CD4-positive, alpha-beta memory T cell (primary cell): ENCODE measurements at regions of chr5 and their contacts with region 1.

Region 1: GRCh38 chr5:57137401-57137800 is 36.5 kb upstream of the GPBP1 start:
- DNase-seq: no peak
- H3K4me3 ChIP-seq: no peak overlapping the region
- H3K4me3 Mint-ChIP-seq: no peak overlapping the region
- H3K27ac ChIP-seq: no peak overlapping the region
- H3K27ac Mint-ChIP-seq: no peak overlapping the region
- H3K4me1 ChIP-seq: no peaks in the 10 kb centered on the region
- H3K4me1 Mint-ChIP-seq: peaks cover 0 to 2% (median under 1%) of the 10 kb centered on the region in 4 donors
- H3K27me3 ChIP-seq: no peaks in the 10 kb centered on the region
- H3K27me3 Mint-ChIP-seq: peaks cover 3 to 5% of the 10 kb centered on the region in 2 donors

Region 2: DNA sequence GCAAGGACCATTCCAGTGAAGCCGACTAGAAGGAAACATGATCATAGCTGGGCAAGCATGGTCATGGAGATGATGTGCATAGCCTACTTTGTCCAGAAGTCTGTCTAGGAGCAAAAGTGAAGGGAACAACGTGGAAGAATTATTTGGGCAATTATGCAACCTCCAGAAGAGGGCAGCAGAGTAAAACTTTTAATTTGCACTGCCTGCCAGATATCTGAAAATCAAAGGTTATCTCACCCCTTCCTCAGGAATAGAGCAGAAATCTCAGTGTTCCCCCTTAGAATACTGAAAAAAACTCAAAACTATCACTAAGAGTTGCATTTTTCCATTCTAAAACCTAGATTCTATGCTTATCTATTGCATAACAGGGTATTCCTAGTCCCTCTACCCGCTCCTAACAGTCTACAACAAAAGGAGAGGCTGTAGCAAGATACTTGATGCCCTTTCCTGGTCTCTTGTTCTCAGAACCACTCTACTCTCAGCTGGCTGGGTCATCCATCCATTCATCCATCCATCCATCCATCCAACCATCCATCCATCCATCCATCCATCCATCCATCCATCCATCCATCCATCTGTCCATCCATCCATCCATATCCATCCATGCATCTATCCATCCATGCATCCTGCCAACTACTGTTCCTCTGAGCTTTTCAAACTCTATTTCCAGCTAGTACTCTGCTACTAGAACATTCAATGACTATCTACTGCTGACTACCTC is 236.4 kb before region 1 on chr5:
- CTCF ChIA-PET with region 1: interaction called, 143 read pairs
- POLR2A ChIA-PET with region 1: interaction called, 6 read pairs
- intact Hi-C with region 1: loop called (anchors 1 kb)
- DNase-seq: peak in 4 of 5 donors; percentile 43 to 64 (median 54)
- H3K4me3 ChIP-seq: no peak overlapping the region
- H3K4me3 Mint-ChIP-seq: no peak overlapping the region
- H3K27ac ChIP-seq: no peak overlapping the region
- H3K27ac Mint-ChIP-seq: no peak overlapping the region
- H3K4me1 ChIP-seq: no peaks in the 10 kb centered on the region
- H3K4me1 Mint-ChIP-seq: peaks cover 2 to 6% (median 4%) of the 10 kb centered on the region in 4 donors
- H3K27me3 ChIP-seq: no peaks in the 10 kb centered on the region
- H3K27me3 Mint-ChIP-seq: no peaks in the 10 kb centered on the region

Region 3: DNA sequence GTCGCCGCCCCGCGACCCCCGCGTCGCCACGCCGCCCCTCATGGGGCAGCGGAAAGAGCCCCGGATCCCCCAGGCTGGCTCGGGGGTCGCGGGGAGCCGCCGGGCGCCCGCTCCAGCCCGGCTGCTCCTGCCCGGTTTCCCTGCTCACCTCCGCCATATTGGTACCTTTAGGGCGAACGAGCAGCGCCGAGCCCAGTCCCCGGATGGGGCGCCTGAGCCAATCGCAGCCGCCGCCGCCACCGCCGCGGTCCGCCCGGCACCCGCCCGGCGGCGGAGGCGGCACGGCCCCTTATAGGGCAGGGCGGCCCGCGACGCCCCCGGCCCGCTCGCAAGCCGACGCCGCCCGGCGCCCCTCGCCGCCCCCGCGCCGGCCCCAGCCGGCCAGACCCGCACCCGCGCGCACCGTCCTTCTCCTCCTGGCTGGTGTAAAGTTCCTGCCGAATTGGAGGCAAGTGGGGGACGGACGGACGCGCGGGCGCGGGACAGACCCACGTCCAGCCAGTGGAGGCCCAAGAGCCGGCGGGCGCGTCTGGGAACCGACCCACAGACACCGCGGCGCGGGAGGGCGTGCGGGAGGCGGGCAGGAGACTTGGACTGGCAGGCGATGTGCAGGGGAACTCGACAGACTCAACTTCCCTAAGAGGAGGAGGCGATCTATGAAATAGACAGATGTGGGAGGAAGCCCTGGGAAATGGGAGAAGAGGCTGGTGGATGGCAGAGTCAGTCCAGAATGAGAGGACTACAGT is 185.3 kb before region 1 on chr5 and contains the start of gene MIER3:
- CTCF ChIA-PET with region 1: interaction called, 17 read pairs
- POLR2A ChIA-PET with region 1: interaction called, 6 read pairs
- intact Hi-C with region 1: loop called (anchors 2 kb)
- DNase-seq: peak; percentile 79 to 83 (median 80)
- H3K4me3 ChIP-seq: peak within 1 kb of the TSS; percentile 57 to 72
- H3K4me3 Mint-ChIP-seq: peak within 1 kb of the TSS; percentile 94 to 98 (median 96)
- H3K27ac ChIP-seq: peak within 1 kb of the TSS; percentile 53
- H3K27ac Mint-ChIP-seq: peak within 1 kb of the TSS; percentile 92 to 96 (median 95)
- H3K4me1 ChIP-seq: peaks cover 16% of the 10 kb centered on the region
- H3K4me1 Mint-ChIP-seq: peaks cover 14 to 25% (median 20%) of the 10 kb centered on the region in 4 donors
- H3K27me3 ChIP-seq: peaks cover 5% of the 10 kb centered on the region
- H3K27me3 Mint-ChIP-seq: peaks cover 6 to 12% of the 10 kb centered on the region in 2 donors
- total RNA-seq, gene MIER3: 27.8 to 32.8 TPM

Region 4: GRCh38 chr5:57007344-57007743 is 130.1 kb before region 1 on chr5:
- CTCF ChIA-PET with region 1: no interaction called
- POLR2A ChIA-PET with region 1: no interaction called
- intact Hi-C with region 1: no loop called
- DNase-seq: no peak
- H3K4me3 ChIP-seq: no peak overlapping the region
- H3K4me3 Mint-ChIP-seq: no peak overlapping the region
- H3K27ac ChIP-seq: no peak overlapping the region
- H3K27ac Mint-ChIP-seq: no peak overlapping the region
- H3K4me1 ChIP-seq: no peaks in the 10 kb centered on the region
- H3K4me1 Mint-ChIP-seq: no peaks in the 10 kb centered on the region
- H3K27me3 ChIP-seq: no peaks in the 10 kb centered on the region
- H3K27me3 Mint-ChIP-seq: peaks cover 0 to 8% of the 10 kb centered on the region in 2 donors

Region 5: GRCh38 chr5:57150681-57151080 is 13.3 kb after region 1 on chr5:
- CTCF ChIA-PET with region 1: interaction called, 10 read pairs
- POLR2A ChIA-PET with region 1: no interaction called
- intact Hi-C with region 1: no loop called
- DNase-seq: no peak
- H3K4me3 ChIP-seq: no peak overlapping the region
- H3K4me3 Mint-ChIP-seq: no peak overlapping the region
- H3K27ac ChIP-seq: no peak overlapping the region
- H3K27ac Mint-ChIP-seq: no peak overlapping the region
- H3K4me1 ChIP-seq: no peaks in the 10 kb centered on the region
- H3K4me1 Mint-ChIP-seq: no peaks in the 10 kb centered on the region
- H3K27me3 ChIP-seq: no peaks in the 10 kb centered on the region
- H3K27me3 Mint-ChIP-seq: peaks cover 2 to 6% of the 10 kb centered on the region in 2 donors

Region 6: DNA sequence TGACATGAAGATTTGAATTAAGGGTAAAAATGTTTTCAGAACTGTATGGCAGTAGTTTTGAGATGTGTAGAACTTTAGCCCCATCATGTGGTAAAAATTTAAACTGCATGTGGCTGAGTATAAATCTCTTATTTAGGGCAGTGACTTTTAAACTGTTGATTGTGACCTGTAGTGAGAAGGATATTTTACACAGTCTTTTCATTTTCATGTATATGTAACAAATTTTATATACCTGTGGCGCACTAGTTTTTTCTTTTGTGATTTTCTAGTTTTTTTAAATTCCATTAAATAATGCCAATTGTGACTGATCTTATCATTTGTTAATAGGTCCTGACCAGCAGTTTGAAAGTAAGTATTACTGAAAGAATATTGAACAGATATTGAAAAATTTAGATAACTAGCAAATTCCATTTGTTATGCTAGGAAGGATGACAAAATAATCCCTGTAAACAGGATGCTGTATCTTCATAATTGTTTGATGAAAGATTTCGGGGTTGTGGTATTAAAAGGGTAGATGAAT is 83.7 kb after region 1 on chr5:
- CTCF ChIA-PET with region 1: interaction called, 43 read pairs
- POLR2A ChIA-PET with region 1: no interaction called
- intact Hi-C with region 1: loop called (anchors 1 kb)
- DNase-seq: peak; percentile 44 to 76 (median 74)
- H3K4me3 ChIP-seq: no peak overlapping the region
- H3K4me3 Mint-ChIP-seq: peak overlapping the region in 2 of 8 donors; percentile 11 to 15
- H3K27ac ChIP-seq: no peak overlapping the region
- H3K27ac Mint-ChIP-seq: peak overlapping the region; percentile 24 to 90 (median 68)
- H3K4me1 ChIP-seq: peaks cover 38% of the 10 kb centered on the region
- H3K4me1 Mint-ChIP-seq: peaks cover 26 to 67% (median 44%) of the 10 kb centered on the region in 4 donors
- H3K27me3 ChIP-seq: no peaks in the 10 kb centered on the region
- H3K27me3 Mint-ChIP-seq: no peaks in the 10 kb centered on the region

Region 7: GRCh38 chr5:57316798-57317327 is 179.5 kb after region 1 on chr5:
- CTCF ChIA-PET with region 1: no interaction called
- POLR2A ChIA-PET with region 1: no interaction called
- intact Hi-C with region 1: no loop called
- DNase-seq: no peak
- H3K4me3 ChIP-seq: no peak overlapping the region
- H3K4me3 Mint-ChIP-seq: no peak overlapping the region
- H3K27ac ChIP-seq: no peak overlapping the region
- H3K27ac Mint-ChIP-seq: no peak overlapping the region
- H3K4me1 ChIP-seq: no peaks in the 10 kb centered on the region
- H3K4me1 Mint-ChIP-seq: peaks cover 0 to 1% (median 0%) of the 10 kb centered on the region in 4 donors
- H3K27me3 ChIP-seq: no peaks in the 10 kb centered on the region
- H3K27me3 Mint-ChIP-seq: peaks cover 1 to 15% of the 10 kb centered on the region in 2 donors